Astrocyte of the cerebellum (primary cell): ENCODE measurements at regions of chr16 and their contacts with region 1.

Region 1: DNA sequence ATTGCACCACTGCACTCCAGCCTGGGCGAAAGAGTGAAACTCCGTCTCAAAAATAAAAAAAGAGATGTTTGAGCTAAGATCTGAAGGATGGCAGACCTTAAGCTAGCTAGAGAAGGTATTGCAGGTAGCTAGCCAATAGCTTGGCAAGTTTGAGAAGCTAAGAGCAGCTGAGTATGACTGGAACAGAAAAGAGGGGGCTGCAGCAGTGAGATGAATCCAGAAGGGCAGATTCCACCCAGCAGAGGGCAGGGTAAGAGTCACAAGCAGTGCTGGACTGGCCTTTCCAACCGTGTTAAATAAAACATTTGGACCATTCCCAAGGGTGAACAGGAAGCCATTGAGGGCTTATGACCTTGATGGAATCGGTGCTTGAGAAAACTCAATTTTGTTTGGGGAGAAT is 5.7 kb upstream of the PHAF1 start:
- DNase-seq: peak; percentile 2
- H3K4me3 ChIP-seq: no peak overlapping the region
- CTCF ChIP-seq: peak; percentile 45

Region 2: DNA sequence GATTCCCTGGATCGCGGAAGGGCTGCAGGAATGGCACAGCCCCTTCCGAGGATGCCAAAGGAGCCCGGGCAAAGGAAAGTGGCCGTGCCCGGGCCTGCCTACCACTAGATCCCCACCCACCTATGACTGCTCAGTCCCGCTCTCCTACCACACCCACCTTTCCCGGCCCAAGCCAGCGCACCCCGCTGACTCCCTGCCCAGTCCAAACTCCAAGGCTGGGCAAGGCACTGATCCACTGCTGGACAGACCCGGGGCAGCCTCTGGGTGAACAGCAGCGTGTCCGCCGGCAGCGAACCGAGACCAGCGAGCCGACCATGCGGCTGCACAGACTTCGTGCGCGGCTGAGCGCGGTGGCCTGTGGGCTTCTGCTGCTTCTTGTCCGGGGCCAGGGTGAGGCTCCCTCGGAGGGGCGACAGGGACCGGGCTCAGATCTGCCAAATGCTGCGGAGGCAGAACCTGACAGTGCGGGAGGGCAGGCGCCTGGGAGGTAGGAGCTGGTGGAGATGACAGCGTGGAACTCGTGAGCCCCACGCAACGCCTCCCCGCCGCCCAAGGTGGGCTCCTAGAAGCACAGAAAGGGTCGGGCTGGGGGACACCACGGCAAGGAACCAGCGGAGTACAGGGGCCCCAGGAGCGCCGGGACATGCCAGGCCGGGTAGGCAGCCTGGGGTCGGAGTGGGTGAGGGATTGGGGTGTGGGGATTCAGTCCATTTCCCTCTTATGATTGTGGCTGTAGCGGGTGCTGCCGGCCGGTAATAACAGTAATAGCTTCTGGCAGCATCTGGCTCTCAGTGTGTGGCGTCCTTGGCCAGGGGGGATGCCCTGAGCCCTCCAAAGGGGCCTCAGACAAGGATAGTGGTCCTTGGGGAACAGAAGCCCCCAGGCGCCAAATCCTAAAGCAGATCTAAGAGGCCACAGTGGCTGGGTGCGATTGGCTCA is 168.5 kb before region 1 on chr16 and contains the start of gene CES2:
- in situ Hi-C with region 1: loop called (anchors 5 kb)
- DNase-seq: no peak
- H3K4me3 ChIP-seq: peak within 1 kb of the TSS; percentile 78
- CTCF ChIP-seq: no peak

Region 3: DNA sequence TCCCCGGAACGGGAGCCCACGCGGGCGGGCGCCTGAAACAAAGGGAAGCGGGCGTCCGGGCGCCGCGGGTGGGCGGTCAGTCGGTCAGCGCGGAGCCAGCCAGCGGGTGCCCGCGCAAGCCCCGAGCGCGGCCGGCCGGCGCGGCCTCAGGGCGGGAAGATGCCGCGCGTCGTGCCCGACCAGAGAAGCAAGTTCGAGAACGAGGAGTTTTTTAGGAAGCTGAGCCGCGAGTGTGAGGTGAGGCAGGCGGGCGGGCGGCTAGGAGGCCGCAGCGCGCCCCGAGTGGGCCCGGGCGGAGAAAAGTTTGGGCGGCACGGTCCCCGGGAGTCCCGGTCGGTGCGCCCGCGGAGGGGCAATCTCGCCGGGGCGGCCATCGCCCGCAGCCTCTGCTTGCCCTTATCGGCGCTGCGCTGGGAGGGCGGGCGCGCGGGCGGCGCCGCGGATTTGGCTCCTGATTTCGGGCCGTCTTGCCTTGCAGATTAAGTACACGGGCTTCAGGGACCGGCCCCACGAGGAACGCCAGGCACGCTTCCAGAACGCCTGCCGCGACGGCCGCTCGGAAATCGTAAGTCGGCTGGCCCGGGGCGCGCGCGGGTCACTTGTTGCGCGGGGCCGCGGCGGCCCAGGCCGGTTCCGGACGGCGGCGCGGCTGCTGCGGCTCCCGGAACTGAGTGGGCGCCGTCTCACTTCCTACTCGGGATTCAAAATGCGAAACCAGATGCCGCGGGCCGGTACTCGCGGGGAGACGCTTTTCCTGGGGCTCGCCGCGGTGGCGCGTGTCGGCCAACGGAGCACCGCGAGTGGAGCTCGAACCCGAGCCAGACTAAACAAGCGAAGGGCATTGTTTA is 74.6 kb before region 1 on chr16:
- in situ Hi-C with region 1: loop called (anchors 5 kb)
- DNase-seq: no peak
- H3K4me3 ChIP-seq: peak overlapping the region; percentile 74
- CTCF ChIP-seq: no peak